Endothelial cell of umbilical vein (primary cell): ENCODE measurements at regions of chr20 and their contacts with region 1.

Region 1: GRCh38 chr20:45138561-45139300 is 14.5 kb upstream of the WFDC12 start:
- DNase-seq: peak; percentile 4
- H3K4me3 ChIP-seq: no peak overlapping the region
- H3K27ac ChIP-seq: no peak overlapping the region
- H3K4me1 ChIP-seq: no peaks in the 10 kb centered on the region
- H3K27me3 ChIP-seq: peaks cover 11 to 12% of the 10 kb centered on the region in 2 experiments
- CTCF ChIP-seq: peak; percentile 69 to 70
- POLR2A ChIP-seq: no peak

Region 2: GRCh38 chr20:45128071-45128470 is 10.7 kb before region 1 on chr20:
- CTCF ChIA-PET with region 1: interaction called, 15 read pairs
- POLR2A ChIA-PET with region 1: no interaction called
- dilution Hi-C with region 1: no loop called
- intact Hi-C with region 1: no loop called
- DNase-seq: no peak
- H3K4me3 ChIP-seq: no peak overlapping the region
- H3K27ac ChIP-seq: no peak overlapping the region
- H3K4me1 ChIP-seq: no peaks in the 10 kb centered on the region
- H3K27me3 ChIP-seq: peaks cover 6 to 26% of the 10 kb centered on the region in 2 experiments
- CTCF ChIP-seq: no peak
- POLR2A ChIP-seq: no peak

Region 3: DNA sequence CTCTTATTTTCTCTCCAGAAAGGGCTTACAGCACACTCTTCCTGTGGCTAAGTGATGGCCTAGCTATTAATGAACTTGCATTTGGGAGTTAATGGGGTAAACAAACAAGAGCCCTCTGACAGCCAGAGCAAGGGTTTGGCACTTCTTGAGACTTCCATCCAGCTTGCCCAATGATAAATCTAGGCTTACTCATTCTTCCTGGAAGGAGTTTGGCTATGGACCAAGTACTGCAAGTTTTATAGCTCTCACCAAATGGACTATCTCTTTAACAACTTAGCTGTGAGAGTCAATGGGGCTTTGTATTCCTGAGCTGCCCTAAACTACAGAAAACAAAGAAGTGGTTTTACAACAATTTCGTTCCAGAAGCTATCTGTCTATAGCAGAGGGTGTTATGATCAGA is 19.2 kb after region 1 on chr20:
- CTCF ChIA-PET with region 1: interaction called, 10 read pairs
- POLR2A ChIA-PET with region 1: no interaction called
- dilution Hi-C with region 1: no loop called
- intact Hi-C with region 1: no loop called
- DNase-seq: peak; percentile 19
- H3K4me3 ChIP-seq: no peak overlapping the region
- H3K27ac ChIP-seq: no peak overlapping the region
- H3K4me1 ChIP-seq: no peaks in the 10 kb centered on the region
- H3K27me3 ChIP-seq: peaks cover 0 to 2% of the 10 kb centered on the region in 2 experiments
- CTCF ChIP-seq: no peak
- POLR2A ChIP-seq: no peak